MCF 10A (cell line): ENCODE measurements at regions of chr5 and their contacts with region 1.

Region 1: DNA sequence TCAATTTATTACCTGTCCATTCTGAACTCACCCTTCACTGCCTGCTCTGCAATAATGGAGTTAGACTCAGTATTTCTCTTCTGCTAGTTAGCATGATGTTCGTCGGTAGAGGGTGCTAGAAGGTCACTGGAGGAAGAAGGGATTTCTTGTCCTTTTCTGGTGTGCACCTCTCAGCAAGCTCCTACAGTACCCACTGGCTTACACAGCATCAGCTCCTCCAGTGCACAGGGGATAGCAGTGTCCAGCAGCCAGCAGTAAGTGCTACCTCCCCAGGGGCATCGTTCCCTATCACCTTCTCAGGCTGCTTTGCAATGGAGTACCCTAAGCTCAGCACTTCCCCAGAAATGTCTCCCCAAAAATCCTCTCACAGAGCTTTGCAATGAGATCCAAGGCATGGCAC is 45.9 kb upstream of the APC start:
- DNase-seq: peak; percentile 73
- H3K4me3 Mint-ChIP-seq: no peak overlapping the region
- H3K27ac Mint-ChIP-seq: no peak overlapping the region
- H3K4me1 Mint-ChIP-seq: no peaks in the 10 kb centered on the region
- H3K27me3 Mint-ChIP-seq: no peaks in the 10 kb centered on the region
- CTCF ChIP-seq: peak; percentile 37

Region 2: GRCh38 chr5:112737463-112738190 is 45.9 kb after region 1 on chr5 and contains the start of gene APC:
- CTCF ChIA-PET with region 1: no interaction called
- POLR2A ChIA-PET with region 1: no interaction called
- intact Hi-C with region 1: loop called (anchors 5 kb)
- DNase-seq: peak; percentile 91
- H3K4me3 Mint-ChIP-seq: peak within 1 kb of the TSS; percentile 92
- H3K27ac Mint-ChIP-seq: peak within 1 kb of the TSS; percentile 92
- H3K4me1 Mint-ChIP-seq: peaks cover 6% of the 10 kb centered on the region
- H3K27me3 Mint-ChIP-seq: no peaks in the 10 kb centered on the region
- CTCF ChIP-seq: no peak
- total RNA-seq, gene APC: 24.9 and 31.8 TPM in 2 replicates

Region 3: DNA sequence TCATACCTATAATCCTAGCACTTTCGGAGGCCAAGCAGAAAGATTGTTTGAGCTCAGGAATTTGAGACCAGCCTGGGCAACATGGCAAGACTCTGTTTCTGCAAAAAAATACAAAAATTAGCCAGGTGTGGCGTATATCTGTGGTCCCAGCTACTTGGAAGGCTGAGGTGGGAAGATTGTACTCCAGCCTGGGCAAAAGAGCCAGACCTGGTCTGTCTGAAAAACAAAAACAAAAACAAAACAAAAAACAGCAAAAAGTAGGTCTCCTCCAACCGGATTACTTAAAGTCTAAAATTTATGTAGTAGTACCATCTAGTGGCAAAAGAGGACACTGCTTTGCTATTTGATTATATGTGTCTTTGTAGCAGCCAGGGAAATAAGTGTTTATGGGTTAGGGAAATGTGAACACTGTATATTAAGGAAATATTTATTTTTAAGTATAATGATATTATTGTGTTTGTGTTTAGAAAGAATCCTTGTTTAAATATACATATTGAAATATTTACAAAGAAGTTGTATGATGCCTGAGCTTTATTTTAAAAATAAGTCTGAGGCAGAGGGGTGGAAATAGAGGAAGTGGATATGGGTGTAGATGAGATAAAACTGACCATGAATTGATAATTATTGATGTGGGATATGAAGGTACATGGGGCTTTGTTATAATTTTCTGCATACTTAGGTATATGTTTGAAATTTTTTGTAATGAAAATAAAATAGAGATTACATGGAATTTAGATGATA is 65.9 kb after region 1 on chr5:
- CTCF ChIA-PET with region 1: interaction called, 13 read pairs
- POLR2A ChIA-PET with region 1: no interaction called
- intact Hi-C with region 1: loop called (anchors 1 kb)
- DNase-seq: peak; percentile 61
- H3K4me3 Mint-ChIP-seq: no peak overlapping the region
- H3K27ac Mint-ChIP-seq: no peak overlapping the region
- H3K4me1 Mint-ChIP-seq: peaks cover 21% of the 10 kb centered on the region
- H3K27me3 Mint-ChIP-seq: no peaks in the 10 kb centered on the region
- CTCF ChIP-seq: peak; percentile 68

Region 4: DNA sequence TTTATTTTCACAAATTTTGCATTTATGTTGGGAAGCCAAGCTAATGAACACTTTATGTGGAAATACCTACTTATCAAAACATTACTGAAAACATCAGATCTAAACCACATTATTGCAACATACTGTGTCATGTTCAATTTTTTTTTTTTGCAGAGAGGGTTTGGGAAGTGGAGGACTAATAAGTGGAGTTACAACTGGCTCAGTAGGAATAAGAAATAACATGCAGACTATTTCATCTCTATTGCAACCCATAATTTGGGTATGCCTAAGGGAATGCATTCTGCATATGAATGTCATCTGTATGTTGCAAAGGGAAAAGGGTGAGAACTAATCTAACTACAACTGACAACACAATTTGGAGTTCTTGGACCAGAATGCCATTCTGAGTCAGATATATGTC is 87.8 kb after region 1 on chr5:
- CTCF ChIA-PET with region 1: no interaction called
- POLR2A ChIA-PET with region 1: no interaction called
- intact Hi-C with region 1: no loop called
- DNase-seq: peak; percentile 61
- H3K4me3 Mint-ChIP-seq: no peak overlapping the region
- H3K27ac Mint-ChIP-seq: no peak overlapping the region
- H3K4me1 Mint-ChIP-seq: peaks cover 7% of the 10 kb centered on the region
- H3K27me3 Mint-ChIP-seq: no peaks in the 10 kb centered on the region
- CTCF ChIP-seq: no peak

Region 5: GRCh38 chr5:112848116-112848811 is 156.5 kb after region 1 on chr5:
- CTCF ChIA-PET with region 1: no interaction called
- POLR2A ChIA-PET with region 1: no interaction called
- intact Hi-C with region 1: loop called (anchors 5 kb)
- DNase-seq: peak; percentile 80
- H3K4me3 Mint-ChIP-seq: no peak overlapping the region
- H3K27ac Mint-ChIP-seq: no peak overlapping the region
- H3K4me1 Mint-ChIP-seq: no peaks in the 10 kb centered on the region
- H3K27me3 Mint-ChIP-seq: no peaks in the 10 kb centered on the region
- CTCF ChIP-seq: peak; percentile 37

Region 6: DNA sequence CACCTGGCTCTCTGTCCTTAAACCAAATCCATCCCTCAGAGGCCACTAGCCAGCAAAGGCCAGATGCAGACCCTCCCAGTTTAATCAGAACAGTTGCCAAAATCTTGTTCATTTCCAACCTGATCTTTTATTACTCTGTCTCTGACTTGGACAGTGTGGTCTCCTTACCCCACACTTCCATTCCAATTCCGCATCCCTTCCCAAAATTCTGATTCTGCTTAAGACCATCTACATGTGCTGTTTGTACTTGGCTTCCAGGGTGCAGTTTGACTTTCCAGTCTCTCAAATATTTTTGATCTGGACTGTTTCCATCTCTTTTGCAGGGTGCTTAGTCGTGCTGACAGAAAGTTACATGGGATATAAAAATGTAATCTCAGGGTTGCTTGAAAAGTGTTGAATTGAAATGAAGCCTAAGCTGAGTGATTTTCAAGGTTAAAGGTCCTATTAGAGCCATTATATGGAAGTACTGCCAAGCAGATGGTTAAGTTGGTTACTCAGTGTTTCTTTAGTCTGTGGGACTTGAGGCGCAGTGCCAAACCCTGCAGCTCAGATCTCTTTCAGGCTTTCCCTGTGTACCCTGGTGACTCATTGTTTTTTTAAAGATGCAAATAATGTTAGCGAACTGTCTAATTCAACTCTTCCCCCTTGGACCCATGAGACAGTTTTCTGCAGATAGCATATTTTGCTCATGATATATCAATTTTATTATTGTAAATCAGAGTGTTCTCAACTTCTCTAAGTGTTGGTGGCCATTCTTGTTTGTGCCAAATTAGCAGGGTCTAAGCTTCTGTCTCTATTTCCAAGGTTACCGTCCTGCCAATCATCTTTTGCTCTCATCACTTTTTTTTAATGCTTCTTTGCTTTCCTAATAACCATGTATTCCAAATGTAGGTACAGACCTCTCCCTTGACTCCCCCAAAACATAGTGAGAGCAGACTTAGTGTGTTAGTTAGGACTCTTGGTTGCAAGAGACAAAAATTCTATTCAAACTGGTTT is 266.6 kb after region 1 on chr5:
- CTCF ChIA-PET with region 1: no interaction called
- POLR2A ChIA-PET with region 1: no interaction called
- intact Hi-C with region 1: loop called (anchors 2 kb)
- DNase-seq: peak; percentile 98
- H3K4me3 Mint-ChIP-seq: no peak overlapping the region
- H3K27ac Mint-ChIP-seq: no peak overlapping the region
- H3K4me1 Mint-ChIP-seq: peaks cover 36% of the 10 kb centered on the region
- H3K27me3 Mint-ChIP-seq: no peaks in the 10 kb centered on the region
- CTCF ChIP-seq: no peak